ENCODE measurements at regions of chr1 and their contacts with region 1.

Region 1: DNA sequence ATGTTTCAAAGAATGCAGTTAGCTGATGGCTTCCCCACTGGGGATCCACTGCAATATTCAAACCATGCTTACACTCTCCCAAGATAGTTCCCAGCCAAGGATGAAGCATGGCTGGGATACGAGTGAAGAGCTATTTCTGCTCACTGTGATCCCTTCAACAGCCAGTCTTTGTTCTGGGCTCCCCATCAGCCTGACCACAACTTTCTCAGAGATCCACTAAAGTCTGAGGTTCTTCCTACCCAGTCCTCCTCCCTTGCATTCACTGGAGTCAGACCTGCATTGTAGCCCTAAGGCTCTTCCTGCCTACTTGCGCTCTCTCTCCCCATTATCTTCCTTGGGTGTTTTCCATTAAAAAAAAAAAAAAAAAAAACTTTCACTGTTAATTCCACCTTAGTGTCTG is 101.4 kb downstream of the TTLL7 start:
- DNase-seq: no peak
- ATAC-seq: no peak
- H3K4me3 ChIP-seq: no peak overlapping the region
- H3K4me3 Mint-ChIP-seq: no peak overlapping the region
- H3K27ac ChIP-seq: no peak overlapping the region
- H3K27ac Mint-ChIP-seq: no peak overlapping the region
- H3K4me1 ChIP-seq: no peaks in the 10 kb centered on the region
- H3K4me1 Mint-ChIP-seq: no peaks in the 10 kb centered on the region
- H3K27me3 ChIP-seq: peaks cover 0 to 2% of the 10 kb centered on the region in 2 experiments
- H3K27me3 Mint-ChIP-seq: peaks cover 4 to 12% of the 10 kb centered on the region in 2 donors

Region 2: DNA sequence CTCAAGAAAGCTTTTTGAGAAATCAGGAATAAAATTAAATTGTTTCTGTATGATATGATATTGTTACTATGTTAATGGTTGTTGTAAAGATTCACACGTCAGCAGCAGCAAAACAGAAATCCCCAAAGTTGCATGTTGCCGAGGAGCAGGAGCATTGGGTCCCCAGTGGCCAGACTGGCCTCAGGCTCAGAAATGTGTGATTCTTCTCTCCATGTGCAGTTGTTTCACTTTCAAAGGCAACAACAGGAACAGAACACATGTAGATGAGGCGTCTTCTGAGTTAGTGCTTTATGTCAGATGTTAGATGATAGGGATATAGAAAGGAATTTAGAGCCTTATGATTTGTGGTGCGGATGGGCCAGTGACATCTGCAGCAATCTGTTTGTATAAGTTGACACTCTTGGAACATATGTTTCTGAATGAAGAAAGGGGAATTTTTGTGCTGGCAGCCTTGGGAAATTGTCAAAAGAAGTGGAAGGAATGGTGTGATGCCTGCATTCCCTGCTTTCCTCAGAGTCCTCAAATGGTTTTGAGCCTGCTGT is 103.5 kb after region 1 on chr1:
- CTCF ChIA-PET with region 1: no interaction called
- POLR2A ChIA-PET with region 1: no interaction called
- DNase-seq: no peak
- ATAC-seq: no peak
- H3K4me3 ChIP-seq: no peak overlapping the region
- H3K4me3 Mint-ChIP-seq: no peak overlapping the region
- H3K27ac ChIP-seq: no peak overlapping the region
- H3K27ac Mint-ChIP-seq: no peak overlapping the region
- H3K4me1 ChIP-seq: peaks cover 4 to 15% of the 10 kb centered on the region in 2 experiments
- H3K4me1 Mint-ChIP-seq: peaks cover 14 to 16% (median 14%) of the 10 kb centered on the region in 3 donors
- H3K27me3 ChIP-seq: peaks cover 2 to 26% of the 10 kb centered on the region in 2 experiments
- H3K27me3 Mint-ChIP-seq: peaks cover 56 to 61% of the 10 kb centered on the region in 2 donors

Region 3: GRCh38 chr1:84192681-84193080 is 295.2 kb after region 1 on chr1:
- CTCF ChIA-PET with region 1: no interaction called
- POLR2A ChIA-PET with region 1: no interaction called
- DNase-seq: no peak
- ATAC-seq: no peak
- H3K4me3 ChIP-seq: peak overlapping the region in 1 of 2 donors; percentile 38
- H3K4me3 Mint-ChIP-seq: no peak overlapping the region
- H3K27ac ChIP-seq: no peak overlapping the region
- H3K27ac Mint-ChIP-seq: no peak overlapping the region
- H3K4me1 ChIP-seq: no peaks in the 10 kb centered on the region
- H3K4me1 Mint-ChIP-seq: peaks cover 2 to 7% (median 7%) of the 10 kb centered on the region in 3 donors
- H3K27me3 ChIP-seq: no peaks in the 10 kb centered on the region
- H3K27me3 Mint-ChIP-seq: no peaks in the 10 kb centered on the region

Region 4: GRCh38 chr1:84344286-84344685 is 446.8 kb after region 1 on chr1:
- CTCF ChIA-PET with region 1: interaction called in 1 of 2 experiments, 12 read pairs
- POLR2A ChIA-PET with region 1: no interaction called
- DNase-seq: no peak
- ATAC-seq: no peak
- H3K4me3 ChIP-seq: no peak overlapping the region
- H3K4me3 Mint-ChIP-seq: no peak overlapping the region
- H3K27ac ChIP-seq: no peak overlapping the region
- H3K27ac Mint-ChIP-seq: no peak overlapping the region
- H3K4me1 ChIP-seq: no peaks in the 10 kb centered on the region
- H3K4me1 Mint-ChIP-seq: no peaks in the 10 kb centered on the region
- H3K27me3 ChIP-seq: peaks cover 0 to 3% of the 10 kb centered on the region in 2 experiments
- H3K27me3 Mint-ChIP-seq: peaks cover 0 to 5% of the 10 kb centered on the region in 2 donors